Uterus (tissue), 4 donors: ENCODE measurements at regions of chr11 and their contacts with region 1.

Region 1: GRCh38 chr11:57131080-57131790 is 50.5 kb upstream of the LRRC55 start:
- DNase-seq: peak; percentile 18 to 20
- H3K4me3 ChIP-seq: no peak overlapping the region
- H3K27ac ChIP-seq: no peak overlapping the region
- H3K4me1 ChIP-seq: no peaks in the 10 kb centered on the region
- H3K27me3 ChIP-seq: no peaks in the 10 kb centered on the region
- CTCF ChIP-seq: peak; percentile 50 to 78 (median 66)
- POLR2A ChIP-seq: no peak

Region 2: GRCh38 chr11:56932572-56933220 is 198.5 kb before region 1 on chr11:
- intact Hi-C with region 1: no loop called
- DNase-seq: no peak
- H3K4me3 ChIP-seq: no peak overlapping the region
- H3K27ac ChIP-seq: no peak overlapping the region
- H3K4me1 ChIP-seq: no peaks in the 10 kb centered on the region
- H3K27me3 ChIP-seq: no peaks in the 10 kb centered on the region
- CTCF ChIP-seq: no peak
- POLR2A ChIP-seq: no peak

Region 3: GRCh38 chr11:57249384-57250319 is 118.4 kb after region 1 on chr11:
- intact Hi-C with region 1: loop called (anchors 10 kb)
- DNase-seq: peak; percentile 54 to 64
- H3K4me3 ChIP-seq: no peak overlapping the region
- H3K27ac ChIP-seq: peak overlapping the region in 1 of 2 donors; percentile 44
- H3K4me1 ChIP-seq: no peaks in the 10 kb centered on the region
- H3K27me3 ChIP-seq: no peaks in the 10 kb centered on the region
- CTCF ChIP-seq: peak; percentile 73 to 85 (median 80)
- POLR2A ChIP-seq: no peak